WTC11 (cell line): ENCODE measurements at regions of chr21 and their contacts with region 1.

Region 1: GRCh38 chr21:41068967-41069642 is 98.9 kb upstream of the BACE2 start:
- DNase-seq: peak; percentile 94
- ATAC-seq: peak; percentile 91
- H3K4me3 Mint-ChIP-seq: peak overlapping the region; percentile 55
- H3K27ac Mint-ChIP-seq: no peak overlapping the region
- H3K4me1 Mint-ChIP-seq: peaks cover 23% of the 10 kb centered on the region
- H3K27me3 Mint-ChIP-seq: peaks cover 7% of the 10 kb centered on the region
- CTCF ChIP-seq: peak; percentile 87

Region 2: DNA sequence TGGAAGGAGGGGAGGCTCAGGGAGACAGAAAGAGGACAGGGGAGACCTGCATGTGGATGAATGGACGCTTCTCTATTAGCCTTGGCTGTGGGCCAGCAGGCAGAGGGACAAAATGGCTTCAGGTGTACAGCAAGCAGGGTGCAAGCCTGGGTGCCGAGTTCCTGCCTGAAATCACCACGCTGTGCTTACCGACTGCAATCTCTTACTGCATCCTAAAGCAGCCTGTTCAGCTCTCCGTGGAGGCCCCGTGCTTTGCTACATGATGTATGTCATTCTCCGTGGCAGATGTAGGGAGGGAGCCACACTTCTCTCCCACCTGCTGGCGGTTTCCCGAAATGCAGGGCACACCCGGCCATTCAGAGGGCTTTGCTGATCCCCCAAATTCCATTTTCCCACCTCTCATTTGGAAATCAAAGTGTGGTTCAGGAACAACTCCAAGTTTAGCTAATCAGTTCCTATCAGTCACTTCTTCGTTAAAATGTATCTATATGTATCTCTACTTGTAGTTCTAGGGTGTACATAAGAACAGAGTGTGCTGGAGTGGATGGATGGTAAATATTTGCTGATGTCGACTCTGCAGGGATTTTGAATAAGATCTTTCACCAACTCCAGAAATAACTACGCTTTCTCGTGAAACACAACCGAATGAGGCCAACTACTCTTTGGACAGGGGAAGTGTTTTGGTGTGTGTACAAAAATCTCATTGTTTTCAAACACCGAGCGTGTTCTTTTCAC is 23.4 kb before region 1 on chr21:
- CTCF ChIA-PET with region 1: interaction called, 14 read pairs
- POLR2A ChIA-PET with region 1: no interaction called
- DNase-seq: peak; percentile 76
- ATAC-seq: peak; percentile 90
- H3K4me3 Mint-ChIP-seq: no peak overlapping the region
- H3K27ac Mint-ChIP-seq: no peak overlapping the region
- H3K4me1 Mint-ChIP-seq: peaks cover 17% of the 10 kb centered on the region
- H3K27me3 Mint-ChIP-seq: no peaks in the 10 kb centered on the region; the same call in 1 of the 2 replicates
- CTCF ChIP-seq: peak; percentile 31; the same call in 1 of the 2 replicates

Region 3: GRCh38 chr21:41133896-41134522 is 64.9 kb after region 1 on chr21:
- CTCF ChIA-PET with region 1: interaction called, 10 read pairs
- POLR2A ChIA-PET with region 1: no interaction called
- DNase-seq: no peak
- ATAC-seq: peak; percentile 70
- H3K4me3 Mint-ChIP-seq: no peak overlapping the region
- H3K27ac Mint-ChIP-seq: no peak overlapping the region
- H3K4me1 Mint-ChIP-seq: no peaks in the 10 kb centered on the region
- H3K27me3 Mint-ChIP-seq: peaks cover 3% of the 10 kb centered on the region; the same call in 1 of the 2 replicates
- CTCF ChIP-seq: no peak; the same call in 1 of the 2 replicates